Activated CD8-positive, alpha-beta memory T cell treated with anti-CD3 and anti-CD28 coated beads, Interleukin-2, amount 10 ng/mL, durations not matched to agents 7 days and 5 days (primary cell): ENCODE measurements at regions of chr5 and their contacts with region 1.

Region 1: GRCh38 chr5:134527146-134527960 is 1.9 kb downstream of the JADE2 start:
- DNase-seq: peak; percentile 85
- ATAC-seq: peak; percentile 50
- H3K4me3 Mint-ChIP-seq: peak overlapping the region; percentile 99
- H3K27ac Mint-ChIP-seq: peak overlapping the region; percentile 83
- H3K4me1 Mint-ChIP-seq: peaks cover 36% of the 10 kb centered on the region
- H3K27me3 Mint-ChIP-seq: no peaks in the 10 kb centered on the region

Region 2: DNA sequence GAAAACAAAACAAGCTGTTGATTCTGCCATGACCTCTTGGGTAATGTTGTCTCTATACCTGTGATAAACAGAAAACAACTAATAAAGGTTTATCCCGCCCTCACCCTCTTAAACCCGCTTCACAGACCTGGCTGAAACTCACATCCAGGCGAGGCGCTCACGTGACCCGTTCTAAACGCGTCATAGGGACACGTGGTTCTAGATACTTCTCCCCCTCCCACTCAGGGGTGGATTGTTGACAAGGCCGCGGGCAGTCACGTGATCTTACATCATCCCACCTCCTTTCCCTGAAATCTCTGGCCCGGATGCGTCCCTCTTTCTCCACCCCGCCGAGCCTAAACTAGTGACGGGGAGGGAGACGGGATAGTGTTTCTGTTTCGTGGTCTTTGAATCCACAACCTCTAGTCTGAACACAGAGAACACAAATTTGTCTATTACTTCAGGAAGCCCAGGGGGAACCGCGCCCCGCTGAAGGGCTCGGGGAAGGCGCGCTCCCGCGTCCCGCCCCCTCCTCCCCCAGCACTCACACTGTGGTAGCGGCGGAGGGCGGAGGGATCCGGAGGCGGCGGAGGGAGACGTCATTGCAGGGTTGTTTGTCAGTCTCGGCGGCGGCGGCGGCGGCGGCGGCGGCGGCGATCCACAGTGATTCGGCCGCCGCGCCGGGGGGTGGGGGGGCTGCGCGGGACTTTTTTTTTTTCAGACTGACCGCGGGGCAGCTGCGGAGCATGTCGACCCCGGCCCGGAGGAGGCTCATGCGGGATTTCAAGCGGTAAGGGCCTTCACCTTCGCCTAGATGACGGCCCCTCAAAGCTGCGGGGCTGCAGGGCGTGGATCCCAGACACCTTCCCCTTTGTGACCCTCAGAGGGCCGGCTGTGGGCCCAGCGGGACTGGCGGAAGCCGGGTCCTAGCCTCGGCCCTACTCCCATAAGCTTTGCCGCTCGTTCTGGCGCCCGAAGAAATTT is 156.2 kb before region 1 on chr5 and contains the start of gene UBE2B:
- CTCF ChIA-PET with region 1: interaction called, 13 read pairs
- DNase-seq: peak; percentile 99
- ATAC-seq: peak; percentile 77
- H3K4me3 Mint-ChIP-seq: peak within 1 kb of the TSS; percentile 98
- H3K27ac Mint-ChIP-seq: peak within 1 kb of the TSS; percentile 99
- H3K4me1 Mint-ChIP-seq: peaks cover 45% of the 10 kb centered on the region
- H3K27me3 Mint-ChIP-seq: no peaks in the 10 kb centered on the region
- total RNA-seq, gene UBE2B: 74.6 to 84.8 TPM

Region 3: DNA sequence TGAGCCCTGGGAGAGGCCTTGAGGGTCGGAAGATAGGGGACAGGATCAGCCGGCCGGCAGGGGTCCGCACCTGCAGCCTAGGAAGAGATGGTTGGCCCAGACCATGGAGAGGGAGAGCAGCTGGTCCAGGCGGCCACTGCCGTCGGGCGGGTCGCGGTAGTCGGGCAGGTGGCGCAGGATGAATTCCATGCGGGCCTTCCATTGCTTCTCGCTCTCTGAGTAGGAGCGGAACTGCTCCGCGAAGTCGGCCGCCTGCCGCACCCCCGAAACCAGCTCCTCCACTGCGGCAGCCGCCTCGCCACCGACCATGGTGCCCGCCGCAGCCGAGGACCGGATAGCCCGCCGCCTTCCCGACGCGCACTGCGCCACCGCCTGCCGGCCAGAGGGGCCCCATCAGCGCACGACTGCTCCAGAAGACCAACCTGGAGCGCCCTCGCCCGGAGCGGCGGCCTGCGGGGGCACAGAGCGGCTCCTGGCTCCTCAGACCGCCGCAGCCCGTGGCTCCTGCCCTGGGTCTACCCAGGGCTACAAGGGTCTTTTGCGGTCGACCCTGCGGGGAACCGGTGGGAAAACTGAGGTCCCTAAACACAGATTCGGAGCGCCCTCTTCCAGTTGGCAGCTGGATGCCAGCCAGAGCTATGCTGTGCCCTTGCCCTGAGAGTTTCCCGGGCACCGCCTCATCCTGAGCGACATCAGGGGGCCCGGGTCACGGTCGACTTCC is 115.6 kb before region 1 on chr5 and contains the start of gene CDKN2AIPNL:
- CTCF ChIA-PET with region 1: interaction called, 25 read pairs
- DNase-seq: peak; percentile 92
- ATAC-seq: peak; percentile 100
- H3K4me3 Mint-ChIP-seq: peak within 1 kb of the TSS; percentile 96
- H3K27ac Mint-ChIP-seq: peak within 1 kb of the TSS; percentile 87
- H3K4me1 Mint-ChIP-seq: peaks cover 30% of the 10 kb centered on the region
- H3K27me3 Mint-ChIP-seq: no peaks in the 10 kb centered on the region
- total RNA-seq, gene CDKN2AIPNL: 28.0 to 33.8 TPM

Region 4: GRCh38 chr5:134503088-134503946 is 24.0 kb before region 1 on chr5:
- CTCF ChIA-PET with region 1: interaction called, 14 read pairs
- DNase-seq: peak; percentile 91
- ATAC-seq: peak; percentile 98
- H3K4me3 Mint-ChIP-seq: peak overlapping the region; percentile 28
- H3K27ac Mint-ChIP-seq: peak overlapping the region; percentile 95
- H3K4me1 Mint-ChIP-seq: peaks cover 47% of the 10 kb centered on the region
- H3K27me3 Mint-ChIP-seq: no peaks in the 10 kb centered on the region

Region 5: DNA sequence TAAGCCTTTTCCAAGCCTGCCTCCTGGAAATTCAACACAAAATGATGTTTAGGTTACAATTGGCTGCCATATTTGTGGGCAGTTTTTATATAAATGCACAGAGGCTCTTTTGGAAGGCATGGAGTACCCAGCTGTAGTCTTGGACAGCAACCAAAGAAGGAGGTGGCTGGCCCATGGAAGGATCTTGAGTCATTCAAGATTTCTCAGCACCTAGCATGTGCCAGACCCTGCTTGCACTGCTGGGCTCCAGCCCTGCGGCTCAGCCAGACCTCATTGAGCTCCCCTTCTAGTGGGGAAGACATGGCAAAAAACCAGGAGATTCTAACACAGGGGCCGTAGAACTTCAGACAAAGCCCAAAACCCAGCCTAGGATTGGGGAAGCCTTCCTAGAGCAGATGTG is 20.2 kb after region 1 on chr5:
- CTCF ChIA-PET with region 1: interaction called, 11 read pairs
- DNase-seq: no peak
- ATAC-seq: no peak
- H3K4me3 Mint-ChIP-seq: no peak overlapping the region
- H3K27ac Mint-ChIP-seq: no peak overlapping the region
- H3K4me1 Mint-ChIP-seq: peaks cover 44% of the 10 kb centered on the region
- H3K27me3 Mint-ChIP-seq: no peaks in the 10 kb centered on the region

Region 6: DNA sequence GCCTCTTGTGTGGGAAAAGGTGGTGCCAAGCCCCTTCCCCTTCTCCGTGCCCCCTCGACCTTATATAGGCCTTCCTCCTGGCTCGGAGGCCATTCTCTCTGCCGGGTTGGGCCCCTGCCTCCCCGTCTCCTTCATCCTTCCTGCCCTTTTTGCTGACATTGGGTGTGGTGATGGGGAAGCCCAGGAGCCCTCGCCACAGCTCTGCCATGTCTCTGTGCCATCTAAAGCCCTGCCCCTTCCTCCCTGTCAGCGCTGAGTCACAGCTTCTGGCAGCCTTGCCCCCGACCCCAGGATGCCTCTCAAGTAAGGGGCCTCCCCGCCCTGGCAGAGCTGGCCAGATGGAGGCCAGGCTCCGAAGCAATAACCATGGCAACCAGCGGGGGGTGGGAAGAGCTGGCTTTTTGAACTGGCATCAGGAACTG is 28.5 kb after region 1 on chr5:
- CTCF ChIA-PET with region 1: interaction called, 19 read pairs
- DNase-seq: peak; percentile 87
- ATAC-seq: peak; percentile 90
- H3K4me3 Mint-ChIP-seq: peak overlapping the region; percentile 12
- H3K27ac Mint-ChIP-seq: peak overlapping the region; percentile 91
- H3K4me1 Mint-ChIP-seq: peaks cover 29% of the 10 kb centered on the region
- H3K27me3 Mint-ChIP-seq: no peaks in the 10 kb centered on the region

Region 7: GRCh38 chr5:134577796-134578363 is 50.5 kb after region 1 on chr5:
- CTCF ChIA-PET with region 1: interaction called, 26 read pairs
- DNase-seq: peak; percentile 83
- ATAC-seq: peak; percentile 76
- H3K4me3 Mint-ChIP-seq: no peak overlapping the region
- H3K27ac Mint-ChIP-seq: peak overlapping the region; percentile 17
- H3K4me1 Mint-ChIP-seq: no peaks in the 10 kb centered on the region
- H3K27me3 Mint-ChIP-seq: no peaks in the 10 kb centered on the region

Region 8: DNA sequence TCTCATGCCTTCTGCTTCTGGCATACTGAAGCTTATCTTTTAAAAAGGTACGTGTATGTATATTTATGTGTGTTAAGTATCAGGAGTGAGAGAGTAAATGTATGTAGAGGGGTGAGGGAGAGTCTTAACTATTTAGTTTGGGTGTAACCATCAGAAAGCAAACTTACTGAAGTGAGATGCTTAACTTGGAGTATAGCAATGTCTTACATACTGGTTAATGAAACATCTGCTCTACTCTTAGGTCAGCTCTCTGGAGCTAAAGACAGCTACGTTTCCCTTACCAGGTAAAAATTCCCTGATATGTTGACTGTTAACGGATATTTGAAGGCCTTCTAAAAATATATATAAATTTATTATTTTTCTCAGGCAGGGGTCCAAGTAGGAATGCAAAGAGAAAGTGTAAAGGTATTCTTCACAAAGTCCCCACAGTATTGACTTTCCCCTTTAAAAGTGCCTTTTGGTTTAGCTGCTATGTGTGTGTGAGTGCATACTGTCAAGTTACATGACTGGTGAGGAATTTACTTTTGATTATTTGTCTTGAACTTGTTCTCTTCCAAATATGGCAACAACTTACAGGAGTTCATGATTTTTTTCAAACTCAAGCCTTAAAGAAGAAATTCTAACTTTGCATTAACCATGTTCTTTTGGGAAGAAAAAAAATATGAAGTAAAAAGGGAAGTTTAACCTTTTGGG is 306.1 kb after region 1 on chr5:
- CTCF ChIA-PET with region 1: no interaction called
- DNase-seq: no peak
- ATAC-seq: no peak
- H3K4me3 Mint-ChIP-seq: no peak overlapping the region
- H3K27ac Mint-ChIP-seq: no peak overlapping the region
- H3K4me1 Mint-ChIP-seq: no peaks in the 10 kb centered on the region
- H3K27me3 Mint-ChIP-seq: no peaks in the 10 kb centered on the region